ENCODE measurements at regions of chr19 and their contacts with region 1.

Region 1: DNA sequence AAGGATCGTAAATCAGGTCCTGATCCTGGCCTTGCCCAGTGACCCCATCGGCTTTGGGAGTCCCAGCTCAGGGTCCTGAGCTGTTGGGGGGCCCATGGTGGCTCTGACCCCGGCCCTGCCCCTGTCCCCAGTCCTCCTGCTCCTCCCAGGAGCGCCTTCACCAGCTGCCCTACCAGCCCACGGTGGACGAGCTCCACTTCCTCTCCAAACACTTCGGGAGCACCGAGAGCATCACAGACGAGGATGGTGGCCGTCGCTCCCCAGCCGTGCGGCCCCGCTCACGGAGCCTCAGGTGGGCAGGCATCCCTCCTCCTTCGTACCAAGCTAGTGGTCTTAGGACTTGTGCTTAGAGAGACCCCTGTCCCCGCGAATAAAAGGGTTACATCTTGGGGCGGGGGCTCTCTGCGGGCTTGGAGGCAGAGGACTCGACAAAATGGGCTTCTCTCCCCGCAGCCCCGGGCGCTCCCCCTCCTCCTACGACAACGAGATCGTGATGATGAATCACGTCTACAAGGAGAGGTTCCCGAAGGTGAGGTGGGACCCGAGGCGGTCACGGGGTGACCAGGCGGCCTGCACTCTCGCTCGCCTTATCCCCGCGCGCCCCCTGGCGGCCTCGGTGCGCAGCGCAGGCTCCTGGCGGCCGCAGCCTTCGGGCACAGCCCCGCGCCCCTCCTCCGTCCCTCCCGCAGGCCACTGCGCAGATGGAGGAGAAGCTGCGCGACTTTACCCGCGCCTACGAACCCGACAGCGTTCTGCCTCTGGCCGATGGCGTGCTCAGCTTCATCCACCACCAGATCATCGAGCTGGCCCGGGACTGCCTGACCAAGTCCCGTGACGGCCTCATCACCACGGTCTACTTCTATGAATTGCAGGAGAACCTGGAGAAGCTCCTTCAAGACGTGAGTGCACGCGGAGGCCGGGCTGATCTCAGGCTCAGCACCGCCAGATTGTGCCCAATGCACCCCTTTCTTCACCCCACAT is 9.1 kb downstream of the MAST1 start:
- H3K4me3 ChIP-seq: peak overlapping the region; percentile 0; the same call in 1 of the 2 replicates
- H3K27ac ChIP-seq: no peak overlapping the region
- H3K4me1 ChIP-seq: no peaks in the 10 kb centered on the region
- CTCF ChIP-seq: peak; percentile 97

Region 2: GRCh38 chr19:12757544-12758274 is 89.7 kb before region 1 on chr19:
- CTCF ChIA-PET with region 1: interaction called, 20 read pairs
- POLR2A ChIA-PET with region 1: no interaction called
- H3K4me3 ChIP-seq: peak overlapping the region; percentile 1; the same call in 1 of the 2 replicates
- H3K27ac ChIP-seq: no peak overlapping the region
- H3K4me1 ChIP-seq: no peaks in the 10 kb centered on the region
- CTCF ChIP-seq: peak; percentile 89

Region 3: GRCh38 chr19:12777217-12778016 is 70.0 kb before region 1 on chr19:
- CTCF ChIA-PET with region 1: interaction called, 24 read pairs
- POLR2A ChIA-PET with region 1: no interaction called
- H3K4me3 ChIP-seq: peak overlapping the region; percentile 39
- H3K27ac ChIP-seq: no peak overlapping the region
- H3K4me1 ChIP-seq: peaks cover 4% of the 10 kb centered on the region; the same call in 1 of the 2 replicates
- CTCF ChIP-seq: peak; percentile 81

Region 4: GRCh38 chr19:12825254-12826131 is 22.0 kb before region 1 on chr19:
- CTCF ChIA-PET with region 1: interaction called, 12 read pairs
- POLR2A ChIA-PET with region 1: no interaction called
- H3K4me3 ChIP-seq: no peak overlapping the region
- H3K27ac ChIP-seq: no peak overlapping the region
- H3K4me1 ChIP-seq: no peaks in the 10 kb centered on the region
- CTCF ChIP-seq: no peak

Region 5: DNA sequence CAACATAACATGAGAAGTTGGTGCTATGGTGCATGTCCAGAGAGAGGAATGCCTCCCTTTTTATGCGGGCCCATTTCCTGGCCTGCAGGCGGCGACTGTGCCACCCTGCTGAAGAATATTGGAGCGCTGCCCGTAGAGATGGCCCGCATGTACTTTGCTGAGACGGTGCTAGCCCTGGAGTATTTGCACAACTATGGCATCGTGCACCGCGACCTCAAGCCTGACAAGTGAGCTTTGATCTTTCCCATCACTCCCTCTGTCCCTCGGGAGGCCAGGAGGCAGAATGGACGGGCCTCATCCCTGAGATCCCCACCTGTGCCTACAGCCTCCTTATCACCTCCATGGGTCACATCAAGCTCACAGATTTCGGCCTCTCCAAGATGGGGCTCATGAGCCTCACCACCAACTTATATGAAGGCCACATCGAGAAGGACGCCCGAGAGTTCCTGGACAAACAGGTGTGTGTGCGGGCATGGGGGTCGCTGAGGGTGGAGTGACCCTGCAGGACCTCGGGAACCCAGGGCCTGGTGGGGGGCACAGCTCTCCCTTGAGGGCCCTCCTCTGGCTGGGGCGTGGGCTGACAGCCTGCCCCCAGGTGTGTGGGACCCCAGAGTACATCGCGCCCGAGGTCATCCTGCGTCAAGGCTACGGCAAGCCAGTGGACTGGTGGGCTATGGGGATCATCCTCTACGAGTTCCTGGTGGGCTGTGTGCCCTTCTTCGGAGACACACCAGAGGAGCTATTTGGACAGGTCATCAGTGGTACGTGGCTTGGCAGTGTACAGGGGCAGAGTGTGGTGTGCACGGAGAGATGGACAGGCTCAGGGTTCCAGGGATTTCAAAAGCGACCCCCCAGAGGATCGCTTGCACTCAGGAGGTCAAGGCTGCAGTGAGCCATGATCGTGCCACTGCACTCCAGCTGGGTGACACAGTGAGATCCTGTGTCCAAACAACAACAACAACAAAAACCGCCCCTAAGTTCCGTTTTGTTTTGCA is 17.6 kb after region 1 on chr19:
- CTCF ChIA-PET with region 1: interaction called, 30 read pairs
- POLR2A ChIA-PET with region 1: no interaction called
- H3K4me3 ChIP-seq: no peak overlapping the region
- H3K27ac ChIP-seq: no peak overlapping the region
- H3K4me1 ChIP-seq: peaks cover 4% of the 10 kb centered on the region
- CTCF ChIP-seq: no peak

Measured in HEK293 (cell line).